Dorsolateral prefrontal cortex (tissue), 120 donors: ENCODE measurements at regions of chr22 and their contacts with region 1.

Region 1: GRCh38 chr22:29306175-29306834 is at the start of gene GAS2L1:
- DNase-seq: peak in 9 of 10 donors; percentile 62 to 89 (median 81)
- H3K4me3 ChIP-seq: peak within 1 kb of the TSS; percentile 56 to 93 (median 82)
- H3K27ac ChIP-seq: peak within 1 kb of the TSS; percentile 15 to 96 (median 86)
- H3K27me3 ChIP-seq: no peaks in the 10 kb centered on the region
- CTCF ChIP-seq: peak; percentile 31 to 81 (median 68)
- total RNA-seq, gene GAS2L1: 33.5 to 139 (median 57.6) TPM

Region 2: DNA sequence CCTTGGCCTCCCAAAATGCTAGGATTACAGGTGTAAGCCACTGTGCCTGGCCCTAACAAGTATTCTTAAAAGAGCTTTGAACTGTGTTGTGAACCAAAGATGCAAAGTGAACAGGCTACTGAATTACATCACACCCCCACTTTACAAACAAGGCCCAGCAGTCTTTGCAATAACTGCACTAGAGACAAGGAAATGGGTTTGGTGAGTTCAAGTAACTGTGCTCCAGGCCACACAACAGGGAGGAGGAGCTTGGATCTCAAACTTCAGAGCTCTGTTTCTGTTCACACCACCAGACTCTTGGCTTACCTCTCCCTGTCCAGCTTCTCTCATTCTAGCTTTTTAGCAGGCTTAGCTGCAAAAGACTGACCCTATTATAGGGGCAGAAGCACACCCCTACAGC is 39.6 kb after region 1 on chr22:
- intact Hi-C with region 1: loop called in 1 of 2 experiments (anchors 5 kb)
- DNase-seq: no peak
- H3K4me3 ChIP-seq: peak overlapping the region in 1 of 59 donors; percentile 5
- H3K27ac ChIP-seq: peak overlapping the region in 52 of 59 donors; percentile 16 to 87 (median 72)
- H3K27me3 ChIP-seq: no peaks in the 10 kb centered on the region
- CTCF ChIP-seq: no peak

Region 3: GRCh38 chr22:29359469-29359868 is 53.2 kb after region 1 on chr22:
- intact Hi-C with region 1: loop called (anchors 2 kb)
- DNase-seq: peak in 9 of 10 donors; percentile 41 to 79 (median 62)
- H3K4me3 ChIP-seq: no peak overlapping the region
- H3K27ac ChIP-seq: peak overlapping the region in 20 of 59 donors; percentile 4 to 65 (median 34)
- H3K27me3 ChIP-seq: no peaks in the 10 kb centered on the region
- CTCF ChIP-seq: peak; percentile 16 to 83 (median 73)

Region 4: GRCh38 chr22:29727131-29727523 is 420.8 kb after region 1 on chr22:
- intact Hi-C with region 1: no loop called
- DNase-seq: peak in 1 of 10 donors; percentile 34
- H3K4me3 ChIP-seq: no peak overlapping the region
- H3K27ac ChIP-seq: no peak overlapping the region
- H3K27me3 ChIP-seq: peaks cover 0 to 3% (median 0%) of the 10 kb centered on the region in 45 donors
- CTCF ChIP-seq: peak in 40 of 56 donors; percentile 17 to 60 (median 36)